Esophagus muscularis mucosa (tissue), 4 donors: ENCODE measurements at regions of chr2 and their contacts with region 1.

Region 1: DNA sequence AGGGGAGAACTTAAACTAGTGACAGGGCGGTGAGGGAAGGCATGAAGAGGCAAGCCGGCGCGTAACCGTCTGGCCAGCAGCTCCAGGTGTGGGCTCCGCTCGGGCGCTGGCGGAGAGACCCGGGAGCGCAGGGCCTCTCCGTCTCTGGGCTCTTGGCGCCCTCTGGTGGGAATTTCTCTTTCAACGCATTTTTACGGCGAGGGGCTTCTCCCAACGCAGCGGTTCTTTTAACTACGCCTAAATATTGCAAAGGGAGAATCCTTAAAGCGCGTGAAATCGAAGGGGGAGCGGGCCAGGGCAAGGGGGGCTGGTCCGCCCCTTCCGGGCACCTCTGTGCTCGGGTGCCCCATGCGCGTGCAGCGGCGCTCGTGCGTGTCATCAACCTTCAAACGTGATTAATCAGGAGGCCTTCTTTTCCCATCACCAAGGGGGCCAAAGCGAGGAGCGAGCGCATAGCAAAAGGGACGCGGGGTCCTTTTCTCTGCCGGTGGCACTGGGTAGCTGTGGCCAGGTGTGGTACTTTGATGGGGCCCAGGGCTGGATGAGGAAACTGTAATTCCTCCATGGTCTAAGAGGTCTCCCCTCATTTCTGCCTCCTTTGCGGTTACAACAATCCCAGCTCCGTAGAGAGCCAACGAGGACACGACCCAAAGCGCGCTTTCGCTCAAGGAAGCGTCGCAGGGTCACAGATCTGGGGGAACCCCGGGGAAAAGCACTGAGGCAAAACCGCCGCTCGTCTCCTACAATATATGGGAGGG is 762 bp upstream of the GAD1 start:
- DNase-seq: peak; percentile 91
- H3K4me3 ChIP-seq: peak overlapping the region; percentile 43 to 58 (median 50)
- H3K27ac ChIP-seq: no peak overlapping the region
- H3K4me1 ChIP-seq: peaks cover 57 to 71% (median 68%) of the 10 kb centered on the region in 4 donors
- H3K27me3 ChIP-seq: peaks cover 10 to 86% (median 77%) of the 10 kb centered on the region in 4 donors
- CTCF ChIP-seq: peak; percentile 59 to 82 (median 70)
- EP300 ChIP-seq: no peak
- POLR2A ChIP-seq: no peak

Region 2: GRCh38 chr2:170139276-170139967 is 676.5 kb before region 1 on chr2:
- intact Hi-C with region 1: no loop called
- DNase-seq: no peak
- H3K4me3 ChIP-seq: no peak overlapping the region
- H3K27ac ChIP-seq: no peak overlapping the region
- H3K4me1 ChIP-seq: peaks cover 0 to 1% (median 0%) of the 10 kb centered on the region in 4 donors
- H3K27me3 ChIP-seq: no peaks in the 10 kb centered on the region
- CTCF ChIP-seq: no peak
- EP300 ChIP-seq: no peak
- POLR2A ChIP-seq: no peak

Region 3: GRCh38 chr2:170354855-170355780 is 460.8 kb before region 1 on chr2:
- intact Hi-C with region 1: no loop called
- DNase-seq: no peak
- H3K4me3 ChIP-seq: no peak overlapping the region
- H3K27ac ChIP-seq: no peak overlapping the region
- H3K4me1 ChIP-seq: no peaks in the 10 kb centered on the region
- H3K27me3 ChIP-seq: peaks cover 0 to 10% (median 0%) of the 10 kb centered on the region in 4 donors
- CTCF ChIP-seq: no peak
- EP300 ChIP-seq: no peak
- POLR2A ChIP-seq: no peak

Region 4: GRCh38 chr2:170369894-170370293 is 446.0 kb before region 1 on chr2:
- intact Hi-C with region 1: loop called (anchors 2 kb)
- DNase-seq: no peak
- H3K4me3 ChIP-seq: no peak overlapping the region
- H3K27ac ChIP-seq: no peak overlapping the region
- H3K4me1 ChIP-seq: no peaks in the 10 kb centered on the region
- H3K27me3 ChIP-seq: peaks cover 0 to 61% (median 5%) of the 10 kb centered on the region in 4 donors
- CTCF ChIP-seq: peak; percentile 27 to 31 (median 27)
- EP300 ChIP-seq: no peak
- POLR2A ChIP-seq: no peak

Region 5: GRCh38 chr2:170409164-170409535 is 406.8 kb before region 1 on chr2:
- intact Hi-C with region 1: loop called (anchors 2 kb)
- DNase-seq: no peak
- H3K4me3 ChIP-seq: peak overlapping the region in 1 of 4 donors; percentile 25
- H3K27ac ChIP-seq: no peak overlapping the region
- H3K4me1 ChIP-seq: peaks cover 4 to 13% (median 10%) of the 10 kb centered on the region in 4 donors
- H3K27me3 ChIP-seq: peaks cover 0 to 15% (median 0%) of the 10 kb centered on the region in 4 donors
- CTCF ChIP-seq: peak; percentile 70 to 87 (median 78)
- EP300 ChIP-seq: no peak
- POLR2A ChIP-seq: no peak

Region 6: GRCh38 chr2:170486730-170487129 is 329.2 kb before region 1 on chr2:
- intact Hi-C with region 1: loop called (anchors 5 kb)
- DNase-seq: no peak
- H3K4me3 ChIP-seq: no peak overlapping the region
- H3K27ac ChIP-seq: no peak overlapping the region
- H3K4me1 ChIP-seq: no peaks in the 10 kb centered on the region
- H3K27me3 ChIP-seq: no peaks in the 10 kb centered on the region
- CTCF ChIP-seq: peak in 1 of 3 experiments; percentile 11
- EP300 ChIP-seq: no peak
- POLR2A ChIP-seq: no peak

Region 7: DNA sequence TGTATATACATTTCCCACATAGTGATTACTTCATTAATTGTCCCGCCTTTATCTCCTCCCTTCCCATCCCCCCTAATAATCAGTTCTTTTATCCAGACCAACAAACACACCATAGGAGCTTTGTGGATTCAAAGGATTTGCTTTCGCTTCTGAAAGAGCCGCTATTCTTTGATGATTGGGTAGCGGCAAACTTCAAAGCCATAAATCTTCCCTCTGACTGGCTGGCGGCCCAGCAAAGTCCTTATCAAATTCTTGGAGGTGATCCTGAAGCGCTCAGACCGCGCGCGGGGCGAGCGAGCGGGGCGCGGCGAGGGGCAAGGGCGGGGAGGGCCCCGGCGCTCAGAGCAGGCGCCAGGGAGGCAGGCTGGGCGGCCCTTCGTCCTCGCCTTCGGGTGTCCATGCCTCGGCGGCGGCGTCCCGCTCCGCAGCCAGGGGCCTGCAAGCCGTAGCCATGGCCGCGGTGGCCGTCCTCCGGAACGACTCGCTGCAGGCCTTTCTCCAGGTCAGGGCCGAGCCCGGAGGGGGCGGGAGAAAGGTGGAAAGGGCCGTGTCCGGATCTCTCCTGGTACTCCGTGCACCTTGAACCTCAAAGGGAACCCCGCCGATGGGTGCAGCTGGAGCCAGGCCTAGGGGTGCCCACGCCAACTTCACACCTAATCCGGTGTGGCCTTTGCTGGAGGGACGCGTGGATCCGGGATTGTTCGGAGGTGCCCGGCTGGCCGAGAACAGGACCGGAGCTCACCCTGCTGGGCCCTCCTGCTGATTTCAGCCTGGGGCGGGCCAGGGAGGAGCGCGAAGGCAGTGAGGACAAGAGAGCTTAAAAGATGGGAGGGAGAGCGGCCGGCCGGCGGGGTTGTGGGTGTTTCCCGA is 100.6 kb before region 1 on chr2 and contains the start of gene SP5:
- intact Hi-C with region 1: loop called (anchors 5 kb)
- DNase-seq: peak; percentile 91
- H3K4me3 ChIP-seq: peak within 1 kb of the TSS; percentile 50 to 67 (median 54)
- H3K27ac ChIP-seq: peak within 1 kb of the TSS in 2 of 4 donors; percentile 27 to 43
- H3K4me1 ChIP-seq: peaks cover 36 to 55% (median 53%) of the 10 kb centered on the region in 4 donors
- H3K27me3 ChIP-seq: peaks cover 11 to 92% (median 57%) of the 10 kb centered on the region in 4 donors
- CTCF ChIP-seq: no peak
- EP300 ChIP-seq: no peak
- POLR2A ChIP-seq: no peak
- total RNA-seq, gene SP5: 0.32 to 0.63 TPM in 2 of 4 donors, not detected in the others

Region 8: GRCh38 chr2:170733798-170734600 is 81.9 kb before region 1 on chr2:
- intact Hi-C with region 1: no loop called
- DNase-seq: peak; percentile 86
- H3K4me3 ChIP-seq: no peak overlapping the region
- H3K27ac ChIP-seq: no peak overlapping the region
- H3K4me1 ChIP-seq: no peaks in the 10 kb centered on the region
- H3K27me3 ChIP-seq: no peaks in the 10 kb centered on the region
- CTCF ChIP-seq: no peak
- EP300 ChIP-seq: no peak
- POLR2A ChIP-seq: no peak

Region 9: GRCh38 chr2:170770606-170771420 is 45.1 kb before region 1 on chr2:
- intact Hi-C with region 1: loop called (anchors 5 kb)
- DNase-seq: no peak
- H3K4me3 ChIP-seq: peak overlapping the region; percentile 72 to 73 (median 73)
- H3K27ac ChIP-seq: peak overlapping the region; percentile 73 to 84 (median 78)
- H3K4me1 ChIP-seq: peaks cover 6 to 19% (median 16%) of the 10 kb centered on the region in 4 donors
- H3K27me3 ChIP-seq: no peaks in the 10 kb centered on the region
- CTCF ChIP-seq: peak in 1 of 3 experiments; percentile 11
- EP300 ChIP-seq: no peak
- POLR2A ChIP-seq: no peak

Region 10: DNA sequence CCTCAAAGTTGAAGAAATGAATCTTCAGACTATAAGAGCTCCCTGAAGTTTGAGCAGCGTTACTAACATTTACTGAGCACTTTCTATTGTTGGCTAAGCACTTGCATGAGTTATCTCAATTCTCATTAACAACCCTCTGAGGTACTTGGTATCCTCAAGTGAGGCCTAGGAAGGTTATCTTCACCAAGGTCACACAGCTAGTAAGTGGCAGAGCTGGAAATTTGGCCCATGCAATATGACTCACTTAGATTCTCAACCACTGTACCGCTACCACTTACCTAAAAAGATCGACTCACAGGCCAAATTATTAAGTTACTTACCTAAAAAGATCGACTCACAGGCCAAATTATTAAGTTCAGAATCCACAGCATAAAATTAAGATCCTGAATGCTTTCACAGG is 1175.1 kb after region 1 on chr2:
- intact Hi-C with region 1: no loop called
- DNase-seq: no peak
- H3K4me3 ChIP-seq: no peak overlapping the region
- H3K27ac ChIP-seq: no peak overlapping the region
- H3K4me1 ChIP-seq: no peaks in the 10 kb centered on the region
- H3K27me3 ChIP-seq: no peaks in the 10 kb centered on the region
- CTCF ChIP-seq: no peak
- EP300 ChIP-seq: no peak
- POLR2A ChIP-seq: no peak